Upper lobe of right lung (tissue), 1 donor: ENCODE measurements at regions of chr2 and their contacts with region 1.

Region 1: DNA sequence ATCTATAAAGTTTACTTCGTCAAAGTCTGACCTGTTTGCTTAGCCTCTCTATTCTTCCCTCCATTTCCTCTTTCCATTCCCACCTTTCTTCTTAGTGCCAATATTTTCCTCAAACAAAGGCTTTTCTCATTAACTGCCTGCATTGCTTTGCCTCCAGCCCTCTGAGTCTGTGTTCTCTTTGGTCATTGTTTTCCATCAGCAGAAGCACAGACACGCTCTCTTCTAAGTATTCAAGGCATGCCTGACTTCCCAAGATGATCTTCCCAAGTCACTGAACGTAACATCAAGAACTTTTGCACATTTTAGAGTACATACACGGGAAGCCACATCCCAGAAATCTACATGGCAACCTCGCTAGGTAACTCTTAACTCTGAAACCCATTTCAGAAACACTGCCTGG is 32.6 kb upstream of the ANXA4 start:
- DNase-seq: no peak
- ATAC-seq: no peak
- H3K4me3 ChIP-seq: no peak overlapping the region
- H3K27ac ChIP-seq: no peak overlapping the region
- H3K4me1 ChIP-seq: no peaks in the 10 kb centered on the region
- H3K27me3 ChIP-seq: no peaks in the 10 kb centered on the region
- CTCF ChIP-seq: no peak

Region 2: DNA sequence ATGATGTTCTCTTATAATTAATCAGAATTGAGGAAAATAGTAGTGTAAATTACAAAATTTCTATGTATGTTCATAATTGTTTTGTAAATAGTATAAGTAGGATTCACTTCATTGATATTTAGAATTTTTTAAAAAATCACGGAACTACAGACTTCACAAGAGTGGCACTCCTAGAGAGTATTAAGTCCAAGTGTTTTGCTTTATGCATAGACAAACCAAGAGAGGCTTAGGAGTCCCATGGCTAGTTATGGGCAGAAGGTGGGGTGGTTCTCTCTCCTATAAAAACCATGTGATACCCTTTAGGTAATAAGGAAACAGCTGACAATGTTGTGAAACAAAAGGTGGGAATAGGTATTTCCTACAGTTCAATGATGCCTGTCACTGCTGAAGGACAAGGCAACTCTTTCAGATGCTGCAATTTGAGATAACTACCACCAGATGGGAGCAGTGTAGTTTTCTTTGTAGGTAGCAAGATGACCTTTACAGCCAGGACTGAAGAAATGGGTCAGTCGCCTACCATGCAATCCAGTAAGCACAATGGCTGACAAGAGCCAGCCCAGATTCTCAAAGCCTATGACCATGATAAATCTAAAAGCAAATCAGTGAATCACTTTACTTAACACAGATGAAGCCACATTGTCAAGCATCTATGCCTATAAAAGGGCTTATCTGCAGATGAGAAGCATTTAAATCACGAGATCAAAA is 149.7 kb before region 1 on chr2:
- intact Hi-C with region 1: loop called (anchors 5 kb)
- DNase-seq: no peak
- ATAC-seq: peak; percentile 92
- H3K4me3 ChIP-seq: no peak overlapping the region
- H3K27ac ChIP-seq: no peak overlapping the region
- H3K4me1 ChIP-seq: peaks cover 27% of the 10 kb centered on the region
- H3K27me3 ChIP-seq: no peaks in the 10 kb centered on the region
- CTCF ChIP-seq: peak; percentile 73